ENCODE measurements at regions of chr1 and their contacts with region 1.

Region 1: DNA sequence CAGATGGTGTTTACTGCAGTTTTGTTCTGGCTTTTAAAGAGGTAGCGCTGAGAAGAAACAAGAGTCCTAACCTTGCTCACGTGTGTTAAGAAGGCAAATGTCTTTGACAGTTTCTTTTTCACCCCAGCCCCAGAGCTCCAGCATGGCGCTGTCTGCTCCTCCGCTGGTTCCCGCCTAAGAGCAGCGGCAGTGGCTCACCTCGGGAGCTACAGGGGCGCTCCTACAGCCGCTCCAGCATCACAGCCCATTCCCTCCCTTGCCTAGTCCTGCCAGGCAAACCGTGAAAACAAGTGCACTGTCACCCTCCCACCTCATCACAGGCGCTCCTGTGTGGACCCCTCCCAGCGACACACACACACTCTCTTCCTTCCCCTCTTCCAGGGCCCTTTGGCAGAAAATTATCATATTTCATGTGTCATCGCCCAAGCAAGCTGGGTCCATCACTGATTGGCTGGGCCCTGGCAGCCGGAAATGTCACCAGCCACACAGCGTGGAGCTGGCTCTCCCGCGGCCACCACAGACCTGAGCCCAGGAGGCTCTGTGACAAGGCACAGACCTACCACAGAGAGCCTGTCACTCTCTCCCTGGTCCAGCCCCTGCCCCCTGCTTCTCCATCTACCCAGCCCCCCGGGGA is 1.2 kb upstream of the HIVEP3 start:
- DNase-seq: peak; percentile 43 to 90 (median 78)
- H3K4me3 ChIP-seq: peak overlapping the region in 56 of 59 donors; percentile 5 to 89 (median 72)
- H3K27ac ChIP-seq: peak overlapping the region in 39 of 59 donors; percentile 9 to 90 (median 72)
- H3K27me3 ChIP-seq: no peaks in the 10 kb centered on the region
- CTCF ChIP-seq: no peak

Region 2: GRCh38 chr1:41963636-41964035 is 43.8 kb after region 1 on chr1:
- intact Hi-C with region 1: no loop called
- DNase-seq: no peak
- H3K4me3 ChIP-seq: no peak overlapping the region
- H3K27ac ChIP-seq: no peak overlapping the region
- H3K27me3 ChIP-seq: no peaks in the 10 kb centered on the region
- CTCF ChIP-seq: no peak

Region 3: GRCh38 chr1:42035830-42036604 is 116.1 kb after region 1 on chr1:
- intact Hi-C with region 1: loop called (anchors 5 to 10 kb)
- DNase-seq: peak; percentile 92 to 97 (median 96)
- H3K4me3 ChIP-seq: peak overlapping the region; percentile 53 to 98 (median 90)
- H3K27ac ChIP-seq: peak overlapping the region in 45 of 59 donors; percentile 3 to 85 (median 66)
- H3K27me3 ChIP-seq: no peaks in the 10 kb centered on the region
- CTCF ChIP-seq: peak in 3 of 56 donors; percentile 2 to 11 (median 10)

Measured in dorsolateral prefrontal cortex (tissue), 120 donors.